ENCODE measurements at regions of chr12 and their contacts with region 1.

Region 1: DNA sequence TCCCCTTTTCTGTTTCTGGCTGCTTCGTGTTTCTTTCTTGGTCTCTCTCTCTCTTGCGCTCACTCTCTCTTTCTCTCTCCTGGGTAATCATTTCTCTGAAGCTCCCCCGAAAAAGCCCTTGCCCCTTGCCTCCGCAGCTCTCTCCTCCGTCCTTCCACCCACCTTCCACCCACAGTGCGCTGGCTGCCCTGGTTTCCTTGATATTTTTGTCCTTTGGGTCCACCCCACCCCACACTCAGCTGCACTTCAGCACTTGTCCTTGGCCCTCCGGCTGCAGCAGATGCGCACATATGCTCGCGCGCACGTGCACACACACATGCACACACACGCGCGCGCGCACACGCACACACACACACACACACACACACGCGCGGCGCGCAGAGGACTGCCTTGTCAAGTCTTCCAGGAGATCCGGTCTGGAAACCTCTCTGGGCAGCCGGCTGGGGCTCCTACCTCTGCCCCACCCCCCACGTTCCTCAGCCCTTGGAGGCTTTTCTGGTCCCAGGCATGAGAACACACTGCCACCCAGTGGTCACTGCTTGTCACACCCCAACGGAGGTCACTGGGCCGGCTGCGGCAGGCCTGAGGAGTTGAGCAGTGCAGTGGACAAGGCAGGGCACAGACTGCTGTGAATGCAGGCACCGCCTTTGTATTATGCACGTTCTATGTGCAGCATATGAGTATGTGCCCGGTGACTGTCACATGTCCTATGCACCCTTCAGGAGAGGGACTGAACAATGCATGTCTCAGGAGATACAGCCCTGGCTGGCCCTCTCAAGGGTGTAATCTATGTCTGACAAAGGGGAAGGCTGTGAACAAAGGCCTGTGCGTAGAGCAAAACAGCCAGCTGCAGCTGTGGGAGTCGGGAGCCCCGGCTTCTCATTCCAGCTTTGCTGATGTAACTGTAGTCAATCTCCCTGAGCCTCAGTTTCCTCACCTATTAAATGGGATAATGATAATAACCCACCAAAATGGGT is 6.5 kb downstream of the LAG3 start:
- DNase-seq: peak; percentile 96
- H3K4me3 Mint-ChIP-seq: peak overlapping the region; percentile 82
- H3K27ac Mint-ChIP-seq: peak overlapping the region; percentile 63
- H3K4me1 Mint-ChIP-seq: peaks cover 89% of the 10 kb centered on the region
- H3K27me3 Mint-ChIP-seq: no peaks in the 10 kb centered on the region

Region 2: DNA sequence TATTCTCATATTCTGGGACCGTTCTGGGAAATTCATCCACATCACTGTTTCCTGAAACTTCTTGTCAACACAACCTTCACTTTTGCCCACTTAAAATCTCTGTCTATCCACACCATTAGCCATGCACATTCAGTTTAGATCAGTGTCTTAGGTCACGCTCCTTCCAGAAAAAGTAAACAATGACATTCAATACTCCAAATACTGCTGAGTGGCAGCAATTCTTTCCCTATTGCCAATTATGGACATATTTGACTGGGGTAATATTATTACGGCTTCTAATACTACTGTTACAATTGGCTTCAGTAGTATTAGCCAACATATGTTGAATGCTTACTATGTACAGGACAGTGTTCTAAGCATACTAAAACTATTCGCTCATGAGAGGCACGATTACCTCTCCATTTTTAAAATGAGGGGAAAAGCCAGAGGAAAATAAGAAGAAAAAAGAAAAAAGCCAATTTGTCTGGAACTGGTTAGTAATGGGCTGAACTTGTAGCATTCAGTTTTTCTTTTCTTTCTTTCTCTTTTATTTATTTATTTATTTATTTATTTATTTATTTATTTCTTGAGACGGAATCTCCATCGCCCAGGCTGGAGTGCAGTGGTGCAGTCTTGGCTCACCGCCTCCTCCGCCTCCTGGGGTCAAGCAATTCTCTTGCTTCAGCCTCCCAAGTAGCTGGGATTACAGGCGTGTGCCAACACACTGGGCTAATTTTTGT is 371.5 kb before region 1 on chr12:
- CTCF ChIA-PET with region 1: no interaction called
- intact Hi-C with region 1: no loop called
- DNase-seq: no peak
- H3K4me3 Mint-ChIP-seq: no peak overlapping the region
- H3K27ac Mint-ChIP-seq: no peak overlapping the region
- H3K4me1 Mint-ChIP-seq: no peaks in the 10 kb centered on the region
- H3K27me3 Mint-ChIP-seq: no peaks in the 10 kb centered on the region

Region 3: GRCh38 chr12:6563448-6564050 is 215.3 kb before region 1 on chr12:
- CTCF ChIA-PET with region 1: no interaction called
- intact Hi-C with region 1: loop called (anchors 2 kb)
- DNase-seq: peak; percentile 79
- H3K4me3 Mint-ChIP-seq: no peak overlapping the region
- H3K27ac Mint-ChIP-seq: peak overlapping the region; percentile 36
- H3K4me1 Mint-ChIP-seq: peaks cover 39% of the 10 kb centered on the region
- H3K27me3 Mint-ChIP-seq: no peaks in the 10 kb centered on the region

Region 4: GRCh38 chr12:6613776-6614512 is 164.9 kb before region 1 on chr12:
- CTCF ChIA-PET with region 1: interaction called, 7 read pairs
- intact Hi-C with region 1: loop called (anchors 1 kb)
- DNase-seq: peak; percentile 32
- H3K4me3 Mint-ChIP-seq: no peak overlapping the region
- H3K27ac Mint-ChIP-seq: no peak overlapping the region
- H3K4me1 Mint-ChIP-seq: peaks cover 39% of the 10 kb centered on the region
- H3K27me3 Mint-ChIP-seq: no peaks in the 10 kb centered on the region

Region 5: GRCh38 chr12:6735448-6736191 is 43.2 kb before region 1 on chr12:
- CTCF ChIA-PET with region 1: interaction called, 3 read pairs
- intact Hi-C with region 1: loop called (anchors 1 kb)
- DNase-seq: peak; percentile 72
- H3K4me3 Mint-ChIP-seq: no peak overlapping the region
- H3K27ac Mint-ChIP-seq: peak overlapping the region; percentile 53
- H3K4me1 Mint-ChIP-seq: peaks cover 6% of the 10 kb centered on the region
- H3K27me3 Mint-ChIP-seq: no peaks in the 10 kb centered on the region

Region 6: GRCh38 chr12:6766651-6767349 is 12.1 kb before region 1 on chr12:
- CTCF ChIA-PET with region 1: interaction called, 16 read pairs
- intact Hi-C with region 1: loop called (anchors 1 kb)
- DNase-seq: peak; percentile 57
- H3K4me3 Mint-ChIP-seq: peak overlapping the region; percentile 85
- H3K27ac Mint-ChIP-seq: peak overlapping the region; percentile 52
- H3K4me1 Mint-ChIP-seq: peaks cover 38% of the 10 kb centered on the region
- H3K27me3 Mint-ChIP-seq: peaks cover 34% of the 10 kb centered on the region

Region 7: DNA sequence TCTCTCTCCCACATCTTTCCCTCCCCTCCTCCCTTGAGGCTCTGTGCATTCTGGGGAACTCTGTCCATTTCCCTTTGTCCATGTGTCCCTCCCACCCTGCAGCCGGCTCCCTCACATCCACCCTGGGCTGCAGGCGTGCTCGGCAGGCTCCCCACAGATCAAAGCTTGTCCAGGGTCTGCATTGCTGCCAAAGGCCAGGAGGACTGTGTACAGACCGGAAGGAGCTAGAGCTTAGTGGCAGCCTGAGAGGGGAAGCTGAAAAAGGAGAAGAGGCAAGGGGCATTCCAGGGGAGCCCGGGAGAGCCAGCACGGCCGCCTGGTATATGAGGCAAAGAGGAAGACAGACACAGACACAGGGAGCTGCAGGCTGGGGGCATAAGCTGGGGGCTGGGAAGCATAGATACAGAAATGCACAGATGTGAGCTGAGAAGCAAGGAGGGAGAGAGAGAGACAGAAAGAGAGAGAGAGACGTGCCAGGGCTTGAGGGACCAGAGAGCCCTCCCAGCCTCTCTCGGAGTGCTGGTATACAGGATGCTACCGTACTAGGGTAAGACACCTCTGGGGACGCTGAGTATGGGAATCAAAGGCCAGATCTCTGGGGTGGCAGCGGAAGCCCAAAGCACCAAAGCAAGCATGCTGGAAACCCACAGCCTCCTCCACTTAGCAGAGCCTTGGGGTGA is 13.8 kb after region 1 on chr12:
- CTCF ChIA-PET with region 1: interaction called, 39 read pairs
- intact Hi-C with region 1: loop called (anchors 1 kb)
- DNase-seq: peak; percentile 61
- H3K4me3 Mint-ChIP-seq: peak overlapping the region; percentile 97
- H3K27ac Mint-ChIP-seq: peak overlapping the region; percentile 96
- H3K4me1 Mint-ChIP-seq: peaks cover 51% of the 10 kb centered on the region
- H3K27me3 Mint-ChIP-seq: no peaks in the 10 kb centered on the region

Region 8: DNA sequence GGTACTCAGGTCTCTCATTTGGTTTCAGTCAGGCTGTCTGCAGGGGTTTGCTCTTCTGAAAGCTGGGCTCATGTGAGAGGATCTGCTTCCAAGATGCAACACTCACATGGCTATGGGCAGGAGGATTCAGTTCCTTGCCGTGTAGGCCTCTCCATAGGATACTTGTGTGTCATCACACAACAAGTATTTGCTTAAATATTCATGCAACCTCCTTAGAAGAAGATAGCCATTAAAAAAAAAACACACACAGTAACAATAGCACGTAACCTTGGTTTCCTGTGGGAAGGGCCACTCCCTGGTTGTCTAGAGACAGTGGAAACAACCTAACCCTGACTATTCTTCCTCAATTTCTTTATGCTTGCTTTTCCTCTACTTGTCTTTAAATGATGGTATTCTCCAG is 1793.6 kb after region 1 on chr12:
- CTCF ChIA-PET with region 1: no interaction called
- intact Hi-C with region 1: no loop called
- DNase-seq: no peak
- H3K4me3 Mint-ChIP-seq: no peak overlapping the region
- H3K27ac Mint-ChIP-seq: no peak overlapping the region
- H3K4me1 Mint-ChIP-seq: peaks cover 10% of the 10 kb centered on the region
- H3K27me3 Mint-ChIP-seq: peaks cover 2% of the 10 kb centered on the region